MCF 10A (cell line): ENCODE measurements at regions of chr9 and their contacts with region 1.

Region 1: DNA sequence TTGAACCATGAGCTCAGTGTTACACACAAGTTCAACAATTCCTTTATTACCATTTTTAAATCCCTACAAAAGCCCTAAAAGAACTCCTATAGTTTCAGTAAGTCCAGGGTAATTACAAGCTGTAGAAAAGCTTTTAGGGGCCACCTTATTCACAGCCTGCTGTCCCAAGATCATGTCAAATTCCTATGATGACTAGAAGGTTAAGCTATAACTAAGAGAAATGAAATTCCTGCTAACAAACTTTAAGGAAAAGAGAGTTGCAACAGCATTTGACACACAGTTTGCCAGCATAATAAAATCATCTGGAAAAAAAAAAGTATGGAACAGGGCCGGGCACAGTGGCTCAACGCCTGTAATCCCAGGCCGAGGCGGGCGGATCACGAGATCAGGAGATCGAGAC is 31.5 kb downstream of the TMEM245 start:
- DNase-seq: peak; percentile 44
- H3K4me3 Mint-ChIP-seq: no peak overlapping the region
- H3K27ac Mint-ChIP-seq: no peak overlapping the region
- H3K4me1 Mint-ChIP-seq: peaks cover 17% of the 10 kb centered on the region
- H3K27me3 Mint-ChIP-seq: no peaks in the 10 kb centered on the region
- CTCF ChIP-seq: no peak

Region 2: DNA sequence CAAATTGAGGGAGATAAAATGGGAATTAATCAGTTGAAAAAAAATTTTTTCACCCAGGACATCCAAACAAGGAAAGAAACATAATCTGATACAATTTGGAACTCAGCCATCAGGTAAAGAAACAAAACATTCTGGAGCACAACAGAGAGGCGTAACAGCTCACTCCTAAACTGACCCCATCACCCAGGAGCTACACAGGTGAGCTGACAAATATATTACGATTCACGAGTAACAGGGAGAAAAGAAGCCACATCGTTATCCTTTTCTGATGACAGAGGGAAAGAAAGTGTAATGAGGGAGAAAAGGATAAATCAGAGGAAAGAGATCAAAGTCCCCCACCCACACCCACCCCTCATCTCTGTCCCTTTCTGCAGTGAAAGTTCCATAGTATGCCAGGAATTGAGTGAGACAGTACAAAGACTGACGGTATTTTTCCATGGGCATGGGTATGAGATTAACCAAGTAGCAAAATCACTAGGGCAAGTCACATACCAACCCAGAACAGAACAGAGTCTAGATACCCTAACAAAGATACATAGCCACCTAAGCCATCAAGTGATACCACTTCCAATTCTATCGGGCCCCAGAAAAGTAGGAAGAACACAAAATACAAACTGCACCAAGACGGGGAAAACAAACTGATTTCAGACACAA is 13.9 kb before region 1 on chr9:
- CTCF ChIA-PET with region 1: interaction called, 3 read pairs
- POLR2A ChIA-PET with region 1: interaction called, 12 read pairs
- intact Hi-C with region 1: no loop called
- DNase-seq: no peak
- H3K4me3 Mint-ChIP-seq: no peak overlapping the region
- H3K27ac Mint-ChIP-seq: no peak overlapping the region
- H3K4me1 Mint-ChIP-seq: peaks cover 1% of the 10 kb centered on the region
- H3K27me3 Mint-ChIP-seq: no peaks in the 10 kb centered on the region
- CTCF ChIP-seq: no peak

Region 3: GRCh38 chr9:109164042-109164441 is 75.8 kb after region 1 on chr9:
- CTCF ChIA-PET with region 1: no interaction called
- POLR2A ChIA-PET with region 1: no interaction called
- intact Hi-C with region 1: no loop called
- DNase-seq: no peak
- H3K4me3 Mint-ChIP-seq: no peak overlapping the region
- H3K27ac Mint-ChIP-seq: no peak overlapping the region
- H3K4me1 Mint-ChIP-seq: no peaks in the 10 kb centered on the region
- H3K27me3 Mint-ChIP-seq: no peaks in the 10 kb centered on the region
- CTCF ChIP-seq: no peak